Naive thymus-derived CD4-positive, alpha-beta T cell (primary cell): ENCODE measurements at regions of chr16 and their contacts with region 1.

Region 1: DNA sequence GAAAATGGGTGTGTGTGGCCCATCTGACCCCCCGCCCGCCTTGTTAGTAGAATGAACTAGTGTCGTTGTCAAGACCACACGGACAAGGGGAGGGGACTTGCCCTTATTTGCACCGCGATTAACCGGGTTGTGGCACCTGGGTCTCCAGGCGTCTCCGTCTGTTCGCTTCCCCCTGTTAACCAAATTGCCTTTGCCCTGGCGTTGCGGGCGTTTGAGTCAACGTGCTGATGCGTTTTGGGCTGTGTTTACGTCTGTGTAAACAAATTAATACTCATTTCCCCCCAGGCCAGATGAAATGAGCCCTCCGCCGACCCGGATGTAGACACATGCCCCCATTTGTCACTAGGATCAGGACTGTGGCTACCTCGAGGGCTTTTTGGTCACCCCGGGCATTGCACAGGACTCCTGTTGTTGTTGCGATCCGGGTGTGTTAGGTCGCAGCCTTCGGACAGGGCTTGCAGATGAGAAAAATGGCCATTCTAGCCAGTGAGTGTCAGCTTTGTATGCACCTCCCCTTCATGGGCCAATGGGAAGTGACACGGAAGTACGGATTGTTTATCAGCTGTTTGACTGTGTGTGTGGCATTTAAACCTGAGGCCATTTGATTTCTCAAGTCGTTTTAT is 906 bp downstream of the RBL2 start:
- DNase-seq: peak; percentile 33 to 76 (median 73)
- ATAC-seq: peak; percentile 79
- H3K4me3 ChIP-seq: peak overlapping the region; percentile 91
- H3K4me3 Mint-ChIP-seq: peak overlapping the region; percentile 91 to 100 (median 94)
- H3K27ac ChIP-seq: peak overlapping the region; percentile 90
- H3K27ac Mint-ChIP-seq: peak overlapping the region; percentile 92 to 98 (median 95)
- H3K4me1 ChIP-seq: peaks cover 12 to 33% of the 10 kb centered on the region in 2 donors
- H3K4me1 Mint-ChIP-seq: peaks cover 24 to 49% (median 41%) of the 10 kb centered on the region in 7 donors
- H3K27me3 ChIP-seq: no peaks in the 10 kb centered on the region
- H3K27me3 Mint-ChIP-seq: peaks cover 0 to 5% (median 0%) of the 10 kb centered on the region in 5 donors

Region 2: DNA sequence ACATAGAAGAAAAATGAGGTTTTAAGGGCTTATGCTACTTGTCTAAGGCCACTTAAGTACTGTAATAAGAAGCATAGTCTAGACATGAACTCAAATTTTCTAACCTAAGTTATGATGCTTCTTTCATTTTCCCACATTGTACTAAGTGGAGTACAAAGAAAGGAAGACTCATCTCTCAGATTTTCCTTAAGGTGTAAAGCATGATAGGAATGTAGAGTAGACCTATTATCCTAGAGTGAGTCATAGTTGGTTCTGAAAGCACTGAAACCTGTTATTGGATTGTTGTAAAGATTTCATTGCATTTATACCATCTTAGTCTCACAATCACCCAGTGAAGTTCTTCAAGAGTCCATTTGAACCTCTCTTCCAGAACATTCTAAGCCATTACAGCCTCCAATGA is 1232.1 kb before region 1 on chr16:
- CTCF ChIA-PET with region 1: no interaction called
- POLR2A ChIA-PET with region 1: no interaction called
- intact Hi-C with region 1: no loop called
- DNase-seq: no peak
- ATAC-seq: no peak
- H3K4me3 ChIP-seq: no peak overlapping the region
- H3K4me3 Mint-ChIP-seq: no peak overlapping the region
- H3K27ac ChIP-seq: no peak overlapping the region
- H3K27ac Mint-ChIP-seq: no peak overlapping the region
- H3K4me1 ChIP-seq: no peaks in the 10 kb centered on the region
- H3K4me1 Mint-ChIP-seq: no peaks in the 10 kb centered on the region
- H3K27me3 ChIP-seq: no peaks in the 10 kb centered on the region
- H3K27me3 Mint-ChIP-seq: peaks cover 0 to 8% (median 0%) of the 10 kb centered on the region in 5 donors

Region 3: DNA sequence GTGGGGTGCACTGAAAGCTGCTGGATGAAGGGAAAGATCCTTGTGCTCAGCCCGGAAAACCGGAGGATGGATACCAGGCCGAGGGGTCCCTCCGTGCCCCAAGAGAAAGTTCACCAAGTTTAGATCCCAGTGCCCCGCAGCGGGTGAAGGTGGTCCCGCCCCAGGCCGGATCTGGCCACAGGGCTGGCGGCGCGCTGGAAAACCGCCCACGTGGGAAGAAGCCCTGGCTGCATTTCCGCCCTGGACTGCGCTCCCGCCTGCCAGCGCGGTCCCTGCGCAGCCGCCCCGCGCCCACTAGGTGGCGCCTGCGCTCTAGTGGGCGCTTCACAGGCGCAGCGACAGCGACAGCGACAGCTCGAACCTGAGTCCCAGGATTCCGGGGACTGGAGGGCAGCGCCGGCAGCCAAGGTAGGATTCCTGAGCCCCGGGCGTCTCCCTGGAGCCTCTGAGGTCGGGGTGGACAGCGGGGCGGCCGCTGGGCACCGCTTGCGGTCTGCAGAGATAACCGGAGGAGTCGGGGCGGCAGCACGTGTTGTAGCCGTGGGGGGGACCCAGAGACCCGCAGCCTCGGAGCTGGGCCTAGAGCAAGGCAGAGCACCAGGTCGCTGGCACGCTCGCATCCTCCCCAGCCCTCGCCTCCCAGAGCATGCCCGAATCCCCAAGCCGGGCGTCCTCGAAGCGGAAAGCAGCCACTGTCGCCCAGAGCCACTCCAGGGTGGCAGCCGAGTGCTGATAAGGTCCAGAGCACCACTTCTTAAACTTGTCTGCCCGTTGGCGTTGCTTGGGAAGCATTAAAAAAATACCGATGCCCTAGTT is 380.3 kb before region 1 on chr16 and contains the start of gene CHD9:
- CTCF ChIA-PET with region 1: interaction called, 3 read pairs
- POLR2A ChIA-PET with region 1: no interaction called
- intact Hi-C with region 1: loop called in 1 of 2 experiments (anchors 5 kb)
- DNase-seq: peak; percentile 48 to 84 (median 75)
- ATAC-seq: peak; percentile 96
- H3K4me3 ChIP-seq: peak within 1 kb of the TSS; percentile 74
- H3K4me3 Mint-ChIP-seq: peak within 1 kb of the TSS; percentile 77 to 88 (median 84)
- H3K27ac ChIP-seq: peak within 1 kb of the TSS; percentile 36
- H3K27ac Mint-ChIP-seq: peak within 1 kb of the TSS in 6 of 9 donors; percentile 6 to 86 (median 41)
- H3K4me1 ChIP-seq: peaks cover 6 to 9% of the 10 kb centered on the region in 2 donors
- H3K4me1 Mint-ChIP-seq: peaks cover 6 to 42% (median 12%) of the 10 kb centered on the region in 7 donors
- H3K27me3 ChIP-seq: no peaks in the 10 kb centered on the region
- H3K27me3 Mint-ChIP-seq: peaks cover 0 to 8% (median 5%) of the 10 kb centered on the region in 5 donors
- total RNA-seq, gene CHD9: 23.8 to 46.4 (median 36.3) TPM

Region 4: DNA sequence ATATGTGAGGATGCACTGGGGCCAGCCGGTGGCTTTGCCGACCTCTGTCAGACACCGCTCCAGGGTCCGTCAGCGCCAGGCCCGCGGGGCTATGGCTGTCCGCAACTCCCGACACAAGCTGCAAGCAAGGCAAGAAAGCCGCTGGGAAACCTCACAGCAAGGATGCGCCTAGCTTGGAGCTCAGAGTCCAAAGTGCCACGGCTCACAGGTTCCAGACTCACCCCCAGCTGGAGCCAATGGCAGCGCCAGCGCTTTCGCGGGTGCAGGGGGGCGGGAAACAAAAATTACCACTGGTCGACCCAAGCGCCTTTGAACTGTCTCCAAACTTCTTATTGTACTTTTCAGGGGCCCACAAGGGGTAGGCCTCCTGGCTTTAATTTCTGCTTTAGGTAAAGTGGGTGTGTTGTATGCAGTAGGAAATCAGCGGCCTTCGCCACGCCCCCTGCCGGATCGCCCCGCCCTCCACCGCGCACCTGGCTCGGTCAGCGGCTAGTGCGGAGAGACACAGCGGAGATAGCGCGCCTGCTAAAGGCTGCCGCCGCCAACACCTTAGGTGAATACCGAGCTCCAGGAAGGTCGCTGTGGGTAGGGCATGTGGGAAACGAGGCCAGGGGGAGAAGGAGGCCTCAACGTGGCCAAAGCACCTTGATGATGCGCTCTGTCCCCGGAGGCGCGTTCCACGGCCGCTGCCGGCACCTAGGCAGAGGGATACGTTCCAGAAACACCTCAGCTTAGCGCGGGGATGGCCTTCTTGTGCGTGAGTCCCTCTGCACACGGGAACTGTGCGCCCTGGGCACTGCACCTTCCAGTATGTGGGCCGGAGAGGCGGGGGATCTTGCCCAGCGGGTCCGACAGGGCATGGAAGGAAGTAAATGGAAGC is 61.9 kb before region 1 on chr16:
- CTCF ChIA-PET with region 1: no interaction called
- POLR2A ChIA-PET with region 1: interaction called, 5 read pairs
- intact Hi-C with region 1: loop called in 1 of 2 experiments (anchors 1 kb)
- DNase-seq: peak; percentile 64 to 87 (median 84)
- ATAC-seq: peak; percentile 96
- H3K4me3 ChIP-seq: peak overlapping the region; percentile 84
- H3K4me3 Mint-ChIP-seq: peak overlapping the region in 1 of 10 donors; percentile 86
- H3K27ac ChIP-seq: peak overlapping the region; percentile 67
- H3K27ac Mint-ChIP-seq: peak overlapping the region in 8 of 9 donors; percentile 48 to 95 (median 88)
- H3K4me1 ChIP-seq: peaks cover 4 to 7% of the 10 kb centered on the region in 2 donors
- H3K4me1 Mint-ChIP-seq: peaks cover 11 to 44% (median 20%) of the 10 kb centered on the region in 7 donors
- H3K27me3 ChIP-seq: no peaks in the 10 kb centered on the region
- H3K27me3 Mint-ChIP-seq: peaks cover 0 to 32% (median 0%) of the 10 kb centered on the region in 5 donors

Region 5: GRCh38 chr16:53457670-53458069 is 22.5 kb after region 1 on chr16:
- CTCF ChIA-PET with region 1: interaction called, 41 read pairs
- POLR2A ChIA-PET with region 1: interaction called, 517 read pairs
- intact Hi-C with region 1: loop called (anchors 1 kb)
- DNase-seq: peak; percentile 13 to 94 (median 89)
- ATAC-seq: peak; percentile 91
- H3K4me3 ChIP-seq: peak overlapping the region; percentile 38
- H3K4me3 Mint-ChIP-seq: peak overlapping the region; percentile 80 to 93 (median 88)
- H3K27ac ChIP-seq: peak overlapping the region; percentile 65
- H3K27ac Mint-ChIP-seq: peak overlapping the region; percentile 88 to 99 (median 96)
- H3K4me1 ChIP-seq: peaks cover 79 to 81% of the 10 kb centered on the region in 2 donors
- H3K4me1 Mint-ChIP-seq: peaks cover 57 to 100% (median 89%) of the 10 kb centered on the region in 7 donors
- H3K27me3 ChIP-seq: no peaks in the 10 kb centered on the region
- H3K27me3 Mint-ChIP-seq: peaks cover 0 to 2% (median 0%) of the 10 kb centered on the region in 5 donors

Region 6: GRCh38 chr16:53476867-53477266 is 41.7 kb after region 1 on chr16:
- CTCF ChIA-PET with region 1: no interaction called
- POLR2A ChIA-PET with region 1: interaction called, 35 read pairs
- intact Hi-C with region 1: loop called in 1 of 2 experiments (anchors 5 kb)
- DNase-seq: no peak
- ATAC-seq: no peak
- H3K4me3 ChIP-seq: no peak overlapping the region
- H3K4me3 Mint-ChIP-seq: peak overlapping the region in 8 of 10 donors; percentile 2 to 67 (median 38)
- H3K27ac ChIP-seq: no peak overlapping the region
- H3K27ac Mint-ChIP-seq: peak overlapping the region in 8 of 9 donors; percentile 14 to 90 (median 78)
- H3K4me1 ChIP-seq: peaks cover 5 to 20% of the 10 kb centered on the region in 2 donors
- H3K4me1 Mint-ChIP-seq: peaks cover 31 to 84% (median 70%) of the 10 kb centered on the region in 7 donors
- H3K27me3 ChIP-seq: no peaks in the 10 kb centered on the region
- H3K27me3 Mint-ChIP-seq: no peaks in the 10 kb centered on the region

Region 7: GRCh38 chr16:53489755-53490154 is 54.6 kb after region 1 on chr16:
- CTCF ChIA-PET with region 1: interaction called, 4 read pairs
- POLR2A ChIA-PET with region 1: interaction called, 70 read pairs
- intact Hi-C with region 1: no loop called
- DNase-seq: no peak
- ATAC-seq: no peak
- H3K4me3 ChIP-seq: no peak overlapping the region
- H3K4me3 Mint-ChIP-seq: peak overlapping the region in 3 of 10 donors; percentile 21 to 51 (median 48)
- H3K27ac ChIP-seq: peak overlapping the region; percentile 42
- H3K27ac Mint-ChIP-seq: peak overlapping the region in 8 of 9 donors; percentile 52 to 95 (median 74)
- H3K4me1 ChIP-seq: peaks cover 0 to 4% of the 10 kb centered on the region in 2 donors
- H3K4me1 Mint-ChIP-seq: peaks cover 11 to 70% (median 55%) of the 10 kb centered on the region in 7 donors
- H3K27me3 ChIP-seq: no peaks in the 10 kb centered on the region
- H3K27me3 Mint-ChIP-seq: no peaks in the 10 kb centered on the region

Region 8: GRCh38 chr16:53503270-53503923 is 68.2 kb after region 1 on chr16:
- CTCF ChIA-PET with region 1: interaction called, 5 read pairs
- POLR2A ChIA-PET with region 1: interaction called, 136 read pairs
- intact Hi-C with region 1: loop called (anchors 1 kb)
- DNase-seq: peak; percentile 94 to 100 (median 100)
- ATAC-seq: peak; percentile 94
- H3K4me3 ChIP-seq: peak overlapping the region; percentile 66
- H3K4me3 Mint-ChIP-seq: peak overlapping the region; percentile 86 to 97 (median 94)
- H3K27ac ChIP-seq: peak overlapping the region; percentile 79
- H3K27ac Mint-ChIP-seq: peak overlapping the region; percentile 82 to 98 (median 92)
- H3K4me1 ChIP-seq: peaks cover 25 to 38% of the 10 kb centered on the region in 2 donors
- H3K4me1 Mint-ChIP-seq: peaks cover 36 to 54% (median 45%) of the 10 kb centered on the region in 7 donors
- H3K27me3 ChIP-seq: no peaks in the 10 kb centered on the region
- H3K27me3 Mint-ChIP-seq: no peaks in the 10 kb centered on the region

Region 9: GRCh38 chr16:53805113-53805512 is 369.9 kb after region 1 on chr16:
- CTCF ChIA-PET with region 1: no interaction called
- POLR2A ChIA-PET with region 1: no interaction called
- intact Hi-C with region 1: no loop called
- DNase-seq: no peak
- ATAC-seq: no peak
- H3K4me3 ChIP-seq: no peak overlapping the region
- H3K4me3 Mint-ChIP-seq: no peak overlapping the region
- H3K27ac ChIP-seq: no peak overlapping the region
- H3K27ac Mint-ChIP-seq: no peak overlapping the region
- H3K4me1 ChIP-seq: peaks cover 0 to 8% of the 10 kb centered on the region in 2 donors
- H3K4me1 Mint-ChIP-seq: peaks cover 0 to 72% (median 49%) of the 10 kb centered on the region in 7 donors
- H3K27me3 ChIP-seq: no peaks in the 10 kb centered on the region
- H3K27me3 Mint-ChIP-seq: no peaks in the 10 kb centered on the region

Region 10: GRCh38 chr16:54806378-54806777 is 1371.2 kb after region 1 on chr16:
- CTCF ChIA-PET with region 1: no interaction called
- POLR2A ChIA-PET with region 1: no interaction called
- intact Hi-C with region 1: no loop called
- DNase-seq: no peak
- ATAC-seq: no peak
- H3K4me3 ChIP-seq: no peak overlapping the region
- H3K4me3 Mint-ChIP-seq: no peak overlapping the region
- H3K27ac ChIP-seq: no peak overlapping the region
- H3K27ac Mint-ChIP-seq: no peak overlapping the region
- H3K4me1 ChIP-seq: no peaks in the 10 kb centered on the region
- H3K4me1 Mint-ChIP-seq: no peaks in the 10 kb centered on the region
- H3K27me3 ChIP-seq: no peaks in the 10 kb centered on the region
- H3K27me3 Mint-ChIP-seq: peaks cover 0 to 9% (median 5%) of the 10 kb centered on the region in 5 donors